Right ventricle myocardium superior (tissue), 1 donor: ENCODE measurements at regions of chr16 and their contacts with region 1.

Region 1: DNA sequence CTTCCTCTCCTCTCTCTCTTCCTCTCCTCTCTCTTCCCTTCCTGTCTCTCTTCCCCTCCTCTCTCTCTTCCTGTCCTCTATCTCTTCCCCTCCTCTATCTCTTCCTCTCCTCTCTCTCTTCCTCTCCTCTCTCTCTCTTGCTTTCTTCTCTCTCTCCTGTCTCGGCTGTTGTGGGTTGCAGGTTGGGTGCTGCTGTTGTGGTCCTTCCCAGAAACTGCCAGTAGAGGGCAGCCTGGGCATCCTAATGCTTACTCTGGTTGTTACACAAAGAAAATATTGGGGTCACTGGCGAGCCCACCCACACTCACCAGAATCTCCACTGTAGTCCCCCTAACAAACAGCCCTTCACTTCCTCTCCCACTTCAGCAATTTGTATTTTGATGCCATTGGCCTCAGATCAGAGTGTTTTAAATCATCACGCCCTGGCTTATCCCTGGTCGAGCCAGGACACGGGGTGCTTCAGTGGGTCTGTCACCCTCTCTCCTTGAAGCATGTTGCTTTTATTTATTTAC is 4.9 kb upstream of the MMP15 start:
- DNase-seq: peak; percentile 77
- ATAC-seq: peak; percentile 19

Region 2: GRCh38 chr16:58070585-58070984 is 49.9 kb after region 1 on chr16:
- intact Hi-C with region 1: no loop called
- DNase-seq: no peak
- ATAC-seq: no peak

Region 3: GRCh38 chr16:58123896-58124600 is 103.4 kb after region 1 on chr16:
- intact Hi-C with region 1: loop called (anchors 2 kb)
- DNase-seq: no peak
- ATAC-seq: no peak